ENCODE measurements at regions of chr13 and their contacts with region 1.

Region 1: DNA sequence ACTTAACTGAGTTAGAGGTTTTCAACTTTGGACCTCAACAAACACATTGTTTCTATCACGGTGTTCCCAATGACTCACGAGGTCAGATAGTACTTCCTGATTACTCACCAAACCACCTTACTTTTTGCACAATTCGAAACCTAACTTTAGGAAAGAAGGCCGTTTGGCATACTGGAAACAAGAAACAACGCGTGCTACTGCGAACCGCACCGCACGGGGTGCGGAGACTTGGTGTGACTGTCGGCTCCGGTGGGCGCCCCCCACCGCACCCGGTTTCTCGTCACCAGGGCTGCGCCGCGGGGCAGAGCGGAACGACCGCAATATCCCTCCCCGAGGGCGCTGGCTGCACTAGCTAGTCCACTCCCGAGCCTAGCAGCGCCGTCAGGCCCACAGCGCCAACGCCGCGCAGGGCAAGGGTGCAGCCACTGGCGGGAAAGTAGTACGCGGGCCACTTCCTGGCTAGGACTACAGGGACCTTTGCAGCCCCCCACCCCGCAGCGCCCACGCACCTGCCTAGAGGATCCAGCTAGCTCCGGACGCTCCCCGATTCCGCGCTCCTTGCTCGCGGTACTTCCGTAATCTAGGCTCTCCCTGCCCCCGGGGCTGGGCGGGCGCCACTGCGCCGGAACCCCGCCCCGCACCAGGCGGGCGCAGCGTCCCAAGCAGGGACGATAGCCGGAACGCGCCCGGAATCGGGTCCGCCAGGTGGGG is at the start of gene PARP4:
- DNase-seq: peak; percentile 81
- ATAC-seq: peak; percentile 70
- H3K4me3 Mint-ChIP-seq: peak within 1 kb of the TSS; percentile 74
- H3K27ac Mint-ChIP-seq: peak within 1 kb of the TSS; percentile 86
- H3K4me1 Mint-ChIP-seq: peaks cover 37% of the 10 kb centered on the region
- H3K27me3 Mint-ChIP-seq: peaks cover 6% of the 10 kb centered on the region
- total RNA-seq, gene PARP4: 24.6 to 29.1 TPM

Region 2: GRCh38 chr13:23966691-23967615 is 545.4 kb before region 1 on chr13:
- CTCF ChIA-PET with region 1: no interaction called
- POLR2A ChIA-PET with region 1: no interaction called
- intact Hi-C with region 1: loop called in 1 of 2 experiments (anchors 5 kb)
- DNase-seq: peak; percentile 6
- ATAC-seq: peak; percentile 79
- H3K4me3 Mint-ChIP-seq: peak overlapping the region; percentile 63
- H3K27ac Mint-ChIP-seq: peak overlapping the region; percentile 79
- H3K4me1 Mint-ChIP-seq: peaks cover 37% of the 10 kb centered on the region
- H3K27me3 Mint-ChIP-seq: no peaks in the 10 kb centered on the region

Region 3: GRCh38 chr13:24254146-24254841 is 258.1 kb before region 1 on chr13:
- CTCF ChIA-PET with region 1: no interaction called
- POLR2A ChIA-PET with region 1: no interaction called
- intact Hi-C with region 1: loop called (anchors 1 to 5 kb)
- DNase-seq: peak; percentile 76
- ATAC-seq: peak; percentile 61
- H3K4me3 Mint-ChIP-seq: peak overlapping the region; percentile 95
- H3K27ac Mint-ChIP-seq: peak overlapping the region; percentile 96
- H3K4me1 Mint-ChIP-seq: peaks cover 88% of the 10 kb centered on the region
- H3K27me3 Mint-ChIP-seq: no peaks in the 10 kb centered on the region

Region 4: GRCh38 chr13:24459234-24459633 is 53.1 kb before region 1 on chr13:
- CTCF ChIA-PET with region 1: no interaction called
- POLR2A ChIA-PET with region 1: no interaction called
- intact Hi-C with region 1: loop called in 1 of 2 experiments (anchors 2 kb)
- DNase-seq: peak; percentile 28
- ATAC-seq: peak; percentile 96
- H3K4me3 Mint-ChIP-seq: no peak overlapping the region
- H3K27ac Mint-ChIP-seq: no peak overlapping the region
- H3K4me1 Mint-ChIP-seq: peaks cover 18% of the 10 kb centered on the region
- H3K27me3 Mint-ChIP-seq: no peaks in the 10 kb centered on the region

Region 5: GRCh38 chr13:24605923-24606372 is 93.6 kb after region 1 on chr13:
- CTCF ChIA-PET with region 1: interaction called, 3 read pairs
- POLR2A ChIA-PET with region 1: no interaction called
- intact Hi-C with region 1: loop called in 1 of 2 experiments (anchors 1 kb)
- DNase-seq: peak; percentile 26
- ATAC-seq: peak; percentile 90
- H3K4me3 Mint-ChIP-seq: no peak overlapping the region
- H3K27ac Mint-ChIP-seq: peak overlapping the region; percentile 65
- H3K4me1 Mint-ChIP-seq: peaks cover 32% of the 10 kb centered on the region
- H3K27me3 Mint-ChIP-seq: peaks cover 15% of the 10 kb centered on the region

Region 6: DNA sequence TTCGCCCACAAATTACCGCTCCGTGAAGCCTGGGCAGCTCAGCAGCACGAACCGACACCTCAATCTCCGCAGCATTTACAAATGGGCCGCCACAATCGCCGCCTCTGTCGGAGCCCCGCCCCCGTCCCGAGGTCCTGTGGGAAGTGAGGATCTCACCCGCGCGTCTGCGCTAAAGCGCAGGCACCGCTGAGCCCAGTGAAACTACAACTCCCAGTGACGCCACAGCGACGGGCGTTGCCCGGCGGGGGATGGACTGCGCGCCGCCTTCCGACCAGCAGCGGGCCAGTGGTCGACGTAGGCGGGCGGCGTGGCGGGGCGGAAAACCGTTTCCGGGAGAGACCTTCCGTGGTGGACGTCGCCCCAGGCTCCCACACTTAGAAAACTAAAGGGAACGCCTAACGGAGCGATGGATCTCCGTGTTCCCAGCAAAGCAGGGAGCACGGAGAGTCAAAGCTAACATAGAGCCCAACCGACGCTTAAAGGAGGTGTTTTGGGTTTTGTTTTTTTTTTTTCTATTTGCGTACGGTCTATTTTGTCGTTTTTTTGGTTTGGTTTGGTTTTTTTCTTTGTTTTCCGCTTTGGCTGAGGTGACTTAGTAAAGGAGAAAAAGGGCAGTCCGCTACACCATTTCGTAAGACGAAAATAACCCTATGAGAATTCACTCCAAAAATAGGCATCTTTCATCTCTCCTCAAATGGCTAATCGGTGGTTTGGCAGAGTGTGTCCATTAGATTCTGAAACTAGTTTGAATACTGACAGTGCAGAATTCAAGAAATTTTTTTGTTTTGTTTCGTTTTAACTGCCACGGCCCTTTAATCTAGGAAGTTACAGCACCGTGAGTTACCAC is 410.6 kb after region 1 on chr13:
- CTCF ChIA-PET with region 1: no interaction called
- POLR2A ChIA-PET with region 1: no interaction called
- intact Hi-C with region 1: loop called in 1 of 2 experiments (anchors 2 kb)
- DNase-seq: peak; percentile 96
- ATAC-seq: peak; percentile 100
- H3K4me3 Mint-ChIP-seq: peak overlapping the region; percentile 97
- H3K27ac Mint-ChIP-seq: peak overlapping the region; percentile 94
- H3K4me1 Mint-ChIP-seq: peaks cover 9% of the 10 kb centered on the region
- H3K27me3 Mint-ChIP-seq: peaks cover 2% of the 10 kb centered on the region

Region 7: GRCh38 chr13:25901460-25902376 is 1389.4 kb after region 1 on chr13:
- CTCF ChIA-PET with region 1: no interaction called
- POLR2A ChIA-PET with region 1: no interaction called
- intact Hi-C with region 1: loop called in 1 of 2 experiments (anchors 5 kb)
- DNase-seq: peak; percentile 48
- ATAC-seq: peak; percentile 88
- H3K4me3 Mint-ChIP-seq: no peak overlapping the region
- H3K27ac Mint-ChIP-seq: no peak overlapping the region
- H3K4me1 Mint-ChIP-seq: peaks cover 20% of the 10 kb centered on the region
- H3K27me3 Mint-ChIP-seq: peaks cover 2% of the 10 kb centered on the region